ENCODE measurements at regions of chr16 and their contacts with region 1.

Region 1: GRCh38 chr16:58515125-58515870 is at the start of gene SETD6:
- DNase-seq: peak; percentile 86
- H3K4me3 ChIP-seq: peak within 1 kb of the TSS; percentile 80
- H3K27ac ChIP-seq: peak within 1 kb of the TSS; percentile 73
- H3K4me1 ChIP-seq: peaks cover 8% of the 10 kb centered on the region
- H3K27me3 ChIP-seq: no peaks in the 10 kb centered on the region
- CTCF ChIP-seq: no peak
- total RNA-seq, gene SETD6: 35.2 and 36.1 TPM in 2 replicates

Region 2: DNA sequence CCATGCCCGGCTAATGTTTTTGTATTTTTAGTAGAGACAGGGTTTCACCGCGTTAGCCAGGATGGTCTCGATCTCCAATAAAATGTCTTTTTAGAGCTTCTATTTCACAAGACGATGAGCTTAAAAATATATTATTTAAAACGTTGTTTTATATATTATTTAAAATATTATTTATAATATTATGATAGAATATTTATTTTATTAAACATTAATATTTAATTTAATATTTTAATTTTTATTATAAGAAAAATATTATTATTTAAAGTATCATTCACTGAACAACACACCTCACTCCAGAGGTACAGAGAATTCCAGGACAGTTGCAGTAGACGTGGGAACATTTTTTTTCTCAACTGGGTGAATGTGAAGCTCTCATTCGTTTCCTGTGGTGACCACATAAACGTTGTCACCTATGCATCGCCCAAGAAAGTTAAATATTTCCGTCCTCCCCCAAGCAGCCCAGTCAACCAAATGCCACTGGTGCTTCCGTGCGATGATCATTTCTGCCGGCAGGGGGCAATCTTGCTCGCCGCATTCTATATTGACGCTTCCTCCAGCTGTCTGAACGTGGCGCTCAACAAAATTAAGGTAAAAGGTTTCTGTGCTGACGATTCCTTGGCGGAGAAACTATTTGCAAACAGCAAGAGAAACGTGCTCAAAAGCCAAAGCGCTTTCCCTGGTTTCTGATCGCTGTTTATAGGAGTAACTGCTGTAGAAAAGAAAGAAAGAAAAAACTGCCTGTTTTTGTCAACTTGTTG is 178.8 kb before region 1 on chr16:
- CTCF ChIA-PET with region 1: interaction called, 17 read pairs
- POLR2A ChIA-PET with region 1: no interaction called
- intact Hi-C with region 1: no loop called
- DNase-seq: peak; percentile 83
- H3K4me3 ChIP-seq: peak overlapping the region; percentile 28
- H3K27ac ChIP-seq: no peak overlapping the region
- H3K4me1 ChIP-seq: peaks cover 5% of the 10 kb centered on the region
- H3K27me3 ChIP-seq: no peaks in the 10 kb centered on the region
- CTCF ChIP-seq: peak; percentile 96

Region 3: DNA sequence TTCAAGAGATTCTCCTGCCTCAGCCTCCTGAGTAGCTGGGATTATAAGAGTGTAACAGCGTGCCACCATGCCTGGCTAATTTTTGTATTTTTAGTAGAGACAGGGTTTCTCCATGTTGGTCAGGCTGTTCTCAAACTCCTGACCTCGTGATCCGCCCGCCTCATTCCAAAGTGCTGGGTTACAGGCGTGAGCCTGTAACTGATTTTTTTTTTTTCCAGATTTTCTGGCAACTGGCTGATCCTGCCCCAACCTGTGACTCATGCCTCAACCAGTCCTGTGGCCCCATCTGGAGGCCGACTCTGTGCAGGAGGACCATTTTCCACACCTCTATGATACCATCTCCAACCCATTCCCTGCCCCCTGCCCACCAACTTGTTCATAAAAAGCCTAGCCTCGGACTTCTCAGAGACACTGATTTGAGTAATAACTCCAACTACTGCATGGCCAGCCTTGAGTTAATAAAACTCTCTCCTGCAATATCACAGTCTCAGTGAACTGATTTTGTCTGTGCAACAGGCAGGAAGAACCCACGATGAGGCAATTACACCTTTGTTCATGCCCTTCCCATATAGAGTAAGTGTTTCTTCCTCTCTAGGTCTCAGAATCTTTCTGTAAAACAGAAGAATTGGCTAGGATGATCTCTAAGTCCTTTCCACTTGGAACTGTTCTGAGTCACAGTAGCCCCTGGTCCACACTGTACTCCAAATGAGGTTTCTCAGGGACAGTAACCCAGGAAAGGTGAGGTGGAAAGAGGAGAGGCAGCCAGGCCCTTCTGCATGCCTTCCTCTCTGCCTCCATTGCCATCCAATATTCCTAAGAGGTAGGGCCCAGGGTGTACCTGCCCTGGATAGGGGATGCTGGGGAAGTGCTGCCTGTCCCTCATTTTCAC is 123.1 kb after region 1 on chr16:
- CTCF ChIA-PET with region 1: no interaction called
- POLR2A ChIA-PET with region 1: no interaction called
- intact Hi-C with region 1: loop called (anchors 1 kb)
- DNase-seq: peak; percentile 35
- H3K4me3 ChIP-seq: no peak overlapping the region
- H3K27ac ChIP-seq: no peak overlapping the region
- H3K4me1 ChIP-seq: no peaks in the 10 kb centered on the region
- H3K27me3 ChIP-seq: no peaks in the 10 kb centered on the region
- CTCF ChIP-seq: peak; percentile 41

Region 4: DNA sequence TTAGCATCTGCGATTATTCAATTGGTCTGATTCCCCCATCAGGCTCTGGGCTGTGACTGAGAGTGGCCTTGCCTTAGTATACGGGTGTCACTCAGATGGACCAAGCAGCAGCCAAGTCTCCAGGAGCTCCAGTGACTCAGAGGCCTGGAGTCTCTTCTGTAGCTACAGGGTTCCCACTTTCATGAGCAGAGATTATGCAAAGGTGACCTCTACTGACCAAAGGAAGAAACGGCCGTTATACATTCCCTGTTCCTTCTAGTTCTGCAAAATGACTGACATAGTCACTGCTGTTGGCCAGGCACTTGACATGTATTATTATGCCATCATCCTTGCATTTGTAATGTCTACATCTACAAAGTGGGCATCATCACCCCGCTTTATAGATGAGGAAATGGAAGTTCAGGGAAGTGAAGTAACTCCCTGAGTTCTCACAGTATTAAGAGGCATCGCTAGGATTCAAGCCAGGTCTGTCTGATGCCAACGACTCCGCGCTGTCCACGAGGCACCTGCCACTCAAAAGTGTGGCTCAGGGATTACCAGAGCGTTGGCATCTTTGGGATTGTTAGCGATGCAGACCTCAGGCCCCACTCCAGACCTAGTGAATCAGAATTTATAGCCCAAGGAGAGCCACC is 146.0 kb after region 1 on chr16:
- CTCF ChIA-PET with region 1: interaction called, 13 read pairs
- POLR2A ChIA-PET with region 1: no interaction called
- intact Hi-C with region 1: loop called (anchors 1 kb)
- DNase-seq: peak; percentile 75
- H3K4me3 ChIP-seq: no peak overlapping the region
- H3K27ac ChIP-seq: no peak overlapping the region
- H3K4me1 ChIP-seq: no peaks in the 10 kb centered on the region
- H3K27me3 ChIP-seq: no peaks in the 10 kb centered on the region
- CTCF ChIP-seq: peak; percentile 53

Measured in A673 (cell line).